Naive thymus-derived CD4-positive, alpha-beta T cell (primary cell): ENCODE measurements at regions of chr1 and their contacts with region 1.

Region 1: GRCh38 chr1:169367486-169368405 is at the starts of genes BLZF1 and NME7:
- DNase-seq: peak; percentile 91 to 99 (median 98)
- ATAC-seq: peak; percentile 99
- H3K4me3 ChIP-seq: peak within 1 kb of the TSS; percentile 87
- H3K4me3 Mint-ChIP-seq: peak within 1 kb of the TSS in 3 of 10 donors; percentile 19 to 72 (median 71)
- H3K27ac ChIP-seq: peak within 1 kb of the TSS; percentile 85
- H3K27ac Mint-ChIP-seq: peak within 1 kb of the TSS in 2 of 9 donors; percentile 73 to 78
- H3K4me1 ChIP-seq: peaks cover 4 to 14% of the 10 kb centered on the region in 2 donors
- H3K4me1 Mint-ChIP-seq: peaks cover 20 to 48% (median 28%) of the 10 kb centered on the region in 7 donors
- H3K27me3 ChIP-seq: no peaks in the 10 kb centered on the region
- H3K27me3 Mint-ChIP-seq: no peaks in the 10 kb centered on the region
- total RNA-seq, gene BLZF1: 9.9 to 26.8 (median 17.5) TPM
- total RNA-seq, gene NME7: 8.6 to 14.5 (median 12.7) TPM

Region 2: GRCh38 chr1:168178638-168179437 is 1188.9 kb before region 1 on chr1 and contains the start of gene TIPRL:
- CTCF ChIA-PET with region 1: no interaction called
- POLR2A ChIA-PET with region 1: no interaction called
- intact Hi-C with region 1: loop called (anchors 1 kb)
- DNase-seq: peak; percentile 88 to 94 (median 93)
- ATAC-seq: peak; percentile 95
- H3K4me3 ChIP-seq: peak within 1 kb of the TSS; percentile 80
- H3K4me3 Mint-ChIP-seq: no peak within 1 kb of the TSS
- H3K27ac ChIP-seq: peak within 1 kb of the TSS; percentile 96
- H3K27ac Mint-ChIP-seq: no peak within 1 kb of the TSS
- H3K4me1 ChIP-seq: peaks cover 14 to 16% of the 10 kb centered on the region in 2 donors
- H3K4me1 Mint-ChIP-seq: peaks cover 3 to 20% (median 9%) of the 10 kb centered on the region in 7 donors
- H3K27me3 ChIP-seq: no peaks in the 10 kb centered on the region
- H3K27me3 Mint-ChIP-seq: peaks cover 2 to 9% (median 2%) of the 10 kb centered on the region in 5 donors
- total RNA-seq, gene TIPRL: 17.2 to 41.2 (median 23.5) TPM

Region 3: GRCh38 chr1:169044296-169044695 is 323.4 kb before region 1 on chr1:
- CTCF ChIA-PET with region 1: no interaction called
- POLR2A ChIA-PET with region 1: no interaction called
- intact Hi-C with region 1: loop called in 1 of 2 experiments (anchors 5 kb)
- DNase-seq: peak in 8 of 9 donors; percentile 10 to 65 (median 56)
- ATAC-seq: peak; percentile 93
- H3K4me3 ChIP-seq: peak overlapping the region; percentile 0
- H3K4me3 Mint-ChIP-seq: peak overlapping the region; percentile 59 to 84 (median 72)
- H3K27ac ChIP-seq: no peak overlapping the region
- H3K27ac Mint-ChIP-seq: peak overlapping the region; percentile 16 to 85 (median 73)
- H3K4me1 ChIP-seq: peaks cover 16 to 30% of the 10 kb centered on the region in 2 donors
- H3K4me1 Mint-ChIP-seq: peaks cover 25 to 64% (median 49%) of the 10 kb centered on the region in 7 donors
- H3K27me3 ChIP-seq: no peaks in the 10 kb centered on the region
- H3K27me3 Mint-ChIP-seq: no peaks in the 10 kb centered on the region

Region 4: DNA sequence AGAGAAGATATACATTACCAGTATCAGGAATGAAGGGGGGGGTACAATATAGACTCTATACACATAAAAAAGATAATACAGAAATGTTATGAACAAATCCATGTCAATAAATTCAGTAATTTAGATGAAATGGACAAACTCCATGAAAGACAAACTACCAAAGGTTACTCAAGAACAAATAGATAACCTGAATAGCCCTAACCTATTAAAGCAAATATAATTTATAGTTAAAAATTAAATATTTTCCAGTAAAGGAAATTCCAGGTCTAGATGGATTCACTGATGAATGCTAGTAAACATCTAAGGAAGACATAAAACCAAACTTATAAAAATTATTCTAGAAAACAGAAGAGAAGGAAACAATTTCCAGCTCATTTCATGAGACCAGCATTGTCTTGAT is 13.4 kb after region 1 on chr1:
- CTCF ChIA-PET with region 1: no interaction called
- POLR2A ChIA-PET with region 1: no interaction called
- intact Hi-C with region 1: no loop called
- DNase-seq: no peak
- ATAC-seq: no peak
- H3K4me3 ChIP-seq: no peak overlapping the region
- H3K4me3 Mint-ChIP-seq: no peak overlapping the region
- H3K27ac ChIP-seq: no peak overlapping the region
- H3K27ac Mint-ChIP-seq: peak overlapping the region in 2 of 9 donors; percentile 4 to 11
- H3K4me1 ChIP-seq: no peaks in the 10 kb centered on the region
- H3K4me1 Mint-ChIP-seq: peaks cover 0 to 13% (median 2%) of the 10 kb centered on the region in 7 donors
- H3K27me3 ChIP-seq: no peaks in the 10 kb centered on the region
- H3K27me3 Mint-ChIP-seq: no peaks in the 10 kb centered on the region

Region 5: GRCh38 chr1:169546087-169546995 is 178.6 kb after region 1 on chr1:
- CTCF ChIA-PET with region 1: no interaction called
- POLR2A ChIA-PET with region 1: no interaction called
- intact Hi-C with region 1: loop called (anchors 2 to 5 kb)
- DNase-seq: peak in 7 of 9 donors; percentile 40 to 73 (median 68)
- ATAC-seq: peak; percentile 92
- H3K4me3 ChIP-seq: no peak overlapping the region
- H3K4me3 Mint-ChIP-seq: no peak overlapping the region
- H3K27ac ChIP-seq: no peak overlapping the region
- H3K27ac Mint-ChIP-seq: peak overlapping the region in 1 of 9 donors; percentile 7
- H3K4me1 ChIP-seq: no peaks in the 10 kb centered on the region
- H3K4me1 Mint-ChIP-seq: peaks cover 0 to 14% (median 0%) of the 10 kb centered on the region in 7 donors
- H3K27me3 ChIP-seq: no peaks in the 10 kb centered on the region
- H3K27me3 Mint-ChIP-seq: no peaks in the 10 kb centered on the region

Region 6: DNA sequence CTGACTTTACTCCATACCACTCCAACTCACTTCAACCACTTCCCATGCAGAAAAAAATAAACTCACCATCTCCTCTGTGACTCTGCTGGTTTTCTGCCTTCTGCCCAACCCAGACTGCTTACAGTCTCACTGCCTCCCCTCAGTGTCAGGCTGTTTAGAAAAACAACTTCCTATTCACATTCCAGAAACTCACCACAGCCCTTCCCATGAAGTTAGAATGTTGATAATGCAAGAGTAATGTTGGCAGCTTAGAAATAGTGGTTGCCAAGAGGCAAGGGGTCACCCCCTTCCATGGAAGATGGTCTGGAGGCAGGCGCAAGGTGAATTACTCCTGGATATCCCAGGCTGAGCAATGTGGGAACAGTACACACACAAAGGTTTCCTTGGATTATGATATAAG is 262.3 kb after region 1 on chr1 and contains the start of gene SELP:
- CTCF ChIA-PET with region 1: no interaction called
- POLR2A ChIA-PET with region 1: no interaction called
- intact Hi-C with region 1: no loop called
- DNase-seq: no peak
- ATAC-seq: no peak
- H3K4me3 ChIP-seq: no peak within 1 kb of the TSS
- H3K4me3 Mint-ChIP-seq: peak within 1 kb of the TSS in 4 of 10 donors; percentile 2 to 63 (median 23)
- H3K27ac ChIP-seq: no peak within 1 kb of the TSS
- H3K27ac Mint-ChIP-seq: peak within 1 kb of the TSS in 7 of 9 donors; percentile 32 to 88 (median 84)
- H3K4me1 ChIP-seq: peaks cover 0 to 51% of the 10 kb centered on the region in 2 donors
- H3K4me1 Mint-ChIP-seq: peaks cover 27 to 69% (median 58%) of the 10 kb centered on the region in 7 donors
- H3K27me3 ChIP-seq: no peaks in the 10 kb centered on the region
- H3K27me3 Mint-ChIP-seq: no peaks in the 10 kb centered on the region
- total RNA-seq, gene SELP: 0.27 to 3.2 (median 2.3) TPM

Region 7: DNA sequence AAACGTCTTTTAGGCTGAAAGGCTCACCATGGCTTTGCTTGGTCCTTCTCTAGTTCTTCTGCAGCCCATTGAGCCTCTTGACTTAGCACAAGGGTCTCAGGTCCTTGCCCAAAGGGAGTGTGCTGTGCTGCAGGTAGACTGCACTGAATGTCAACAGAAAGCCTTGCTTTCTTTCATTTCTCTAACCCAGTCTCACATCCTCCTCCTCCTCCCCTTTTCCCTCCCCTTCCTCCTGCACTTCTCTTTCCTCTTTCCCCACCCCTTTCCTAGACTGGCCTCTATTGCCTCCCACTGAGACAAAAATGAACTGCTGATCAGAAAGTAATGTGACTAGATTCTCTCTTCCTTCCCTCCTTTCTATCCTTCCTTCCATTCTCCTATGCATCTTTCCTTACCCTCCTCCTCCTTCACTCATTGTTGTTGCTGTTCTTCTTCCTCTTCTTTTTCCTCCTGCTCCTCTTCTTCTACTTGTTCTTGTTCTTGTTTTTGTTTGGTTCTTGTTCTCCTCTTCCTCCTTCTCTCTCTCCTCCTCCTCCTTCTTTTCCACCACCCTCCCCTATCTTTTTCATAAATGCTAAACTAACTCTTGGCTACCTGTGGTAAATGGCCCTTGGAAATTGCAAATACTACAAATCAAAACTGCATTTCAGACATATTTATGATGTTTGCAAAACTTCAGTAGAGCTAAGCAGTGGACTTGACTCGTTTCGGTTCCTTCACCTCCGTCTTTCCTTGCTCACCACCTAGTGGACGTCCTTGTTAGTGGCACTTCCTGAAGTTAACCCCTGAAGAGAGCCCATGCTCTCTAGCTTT is 343.9 kb after region 1 on chr1 and contains the start of gene SELL:
- CTCF ChIA-PET with region 1: no interaction called
- POLR2A ChIA-PET with region 1: no interaction called
- intact Hi-C with region 1: loop called (anchors 1 to 5 kb)
- DNase-seq: peak; percentile 21 to 83 (median 76)
- ATAC-seq: peak; percentile 91
- H3K4me3 ChIP-seq: peak within 1 kb of the TSS; percentile 62
- H3K4me3 Mint-ChIP-seq: peak within 1 kb of the TSS in 9 of 10 donors; percentile 90 to 99 (median 97)
- H3K27ac ChIP-seq: peak within 1 kb of the TSS; percentile 70
- H3K27ac Mint-ChIP-seq: peak within 1 kb of the TSS in 8 of 9 donors; percentile 85 to 98 (median 94)
- H3K4me1 ChIP-seq: peaks cover 3 to 7% of the 10 kb centered on the region in 2 donors
- H3K4me1 Mint-ChIP-seq: peaks cover 6 to 32% (median 20%) of the 10 kb centered on the region in 7 donors
- H3K27me3 ChIP-seq: no peaks in the 10 kb centered on the region
- H3K27me3 Mint-ChIP-seq: peaks cover 0 to 30% (median 0%) of the 10 kb centered on the region in 5 donors
- total RNA-seq, gene SELL: 303 to 633 (median 519) TPM

Region 8: DNA sequence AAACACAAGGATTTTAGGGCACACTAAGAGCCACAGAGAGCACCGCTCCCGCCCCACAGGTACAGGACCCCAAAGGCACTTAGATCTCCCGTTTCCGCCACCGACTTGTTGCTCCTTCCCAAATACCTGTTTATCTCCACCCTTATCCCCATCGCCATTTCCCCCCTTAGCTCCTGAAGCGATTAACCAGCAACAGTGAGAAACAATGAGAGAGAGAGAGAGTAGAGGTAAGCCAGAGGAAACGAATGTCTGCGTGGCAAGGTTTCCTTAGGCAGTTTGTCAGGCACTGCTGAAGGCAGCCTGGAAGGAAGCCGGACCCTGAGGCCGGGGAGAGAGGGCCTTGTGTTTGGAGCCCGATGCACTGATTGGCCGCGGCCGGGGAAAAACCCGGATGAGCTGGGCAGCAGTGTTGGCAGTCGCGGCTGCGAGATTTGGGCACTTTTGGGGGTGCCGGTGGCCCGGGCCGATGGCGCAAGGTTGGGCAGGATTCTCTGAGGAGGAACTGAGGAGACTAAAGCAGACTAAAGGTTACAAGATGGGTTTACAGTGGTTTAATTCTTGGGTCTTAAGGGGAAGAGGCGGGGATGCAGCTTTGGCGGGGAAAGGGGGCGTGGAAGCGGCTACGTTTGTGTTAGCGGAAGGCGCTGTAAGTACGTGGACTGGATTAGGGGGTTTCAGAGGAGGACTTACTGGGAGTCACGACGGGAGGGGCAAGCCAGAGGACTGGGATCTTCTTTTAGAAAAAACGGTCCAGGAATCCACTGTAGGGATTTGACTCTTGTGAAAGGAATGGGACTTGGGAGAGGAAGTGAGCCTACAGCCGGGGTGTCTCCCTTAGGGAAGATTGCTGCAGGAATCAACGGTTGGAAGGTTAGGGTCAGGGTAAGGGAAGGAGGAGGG is 1164.3 kb after region 1 on chr1 and contains the start of gene GORAB:
- CTCF ChIA-PET with region 1: no interaction called
- POLR2A ChIA-PET with region 1: no interaction called
- intact Hi-C with region 1: loop called in 1 of 2 experiments (anchors 1 kb)
- DNase-seq: peak; percentile 74 to 87 (median 83)
- ATAC-seq: peak; percentile 97
- H3K4me3 ChIP-seq: peak within 1 kb of the TSS; percentile 95
- H3K4me3 Mint-ChIP-seq: no peak within 1 kb of the TSS
- H3K27ac ChIP-seq: peak within 1 kb of the TSS; percentile 91
- H3K27ac Mint-ChIP-seq: peak within 1 kb of the TSS in 1 of 9 donors; percentile 36
- H3K4me1 ChIP-seq: peaks cover 8 to 14% of the 10 kb centered on the region in 2 donors
- H3K4me1 Mint-ChIP-seq: peaks cover 7 to 29% (median 19%) of the 10 kb centered on the region in 7 donors
- H3K27me3 ChIP-seq: no peaks in the 10 kb centered on the region
- H3K27me3 Mint-ChIP-seq: peaks cover 0 to 20% (median 0%) of the 10 kb centered on the region in 5 donors
- total RNA-seq, gene GORAB: 10.9 to 25.3 (median 22.7) TPM